ENCODE measurements at regions of chr7 and their contacts with region 1.

Region 1: GRCh38 chr7:584122-584465 is 64.4 kb upstream of the PDGFA start:
- DNase-seq: peak; percentile 95
- H3K4me3 Mint-ChIP-seq: peak overlapping the region; percentile 86
- H3K27ac Mint-ChIP-seq: peak overlapping the region; percentile 98
- H3K4me1 Mint-ChIP-seq: peaks cover 35% of the 10 kb centered on the region
- H3K27me3 Mint-ChIP-seq: no peaks in the 10 kb centered on the region

Region 2: GRCh38 chr7:618539-619367 is 34.7 kb after region 1 on chr7:
- intact Hi-C with region 1: loop called (anchors 1 kb)
- DNase-seq: peak; percentile 92
- H3K4me3 Mint-ChIP-seq: peak overlapping the region; percentile 79
- H3K27ac Mint-ChIP-seq: peak overlapping the region; percentile 99
- H3K4me1 Mint-ChIP-seq: peaks cover 39% of the 10 kb centered on the region
- H3K27me3 Mint-ChIP-seq: no peaks in the 10 kb centered on the region

Region 3: GRCh38 chr7:657565-658119 is 73.5 kb after region 1 on chr7:
- intact Hi-C with region 1: no loop called
- DNase-seq: no peak
- H3K4me3 Mint-ChIP-seq: no peak overlapping the region
- H3K27ac Mint-ChIP-seq: no peak overlapping the region
- H3K4me1 Mint-ChIP-seq: peaks cover 3% of the 10 kb centered on the region
- H3K27me3 Mint-ChIP-seq: no peaks in the 10 kb centered on the region

Measured in activated CD4-positive, alpha-beta T cell treated with anti-CD3 and anti-CD28 coated beads, Interleukin-2, amount 10 ng/mL, durations not matched to agents 24 days and 14 days (primary cell).